Mammary epithelial cell (primary cell): ENCODE measurements at regions of chr7 and their contacts with region 1.

Region 1: GRCh38 chr7:127392566-127393367 is at the start of gene ZNF800:
- DNase-seq: peak; percentile 75
- H3K4me3 ChIP-seq: peak within 1 kb of the TSS; percentile 71 to 99 (median 86)
- H3K27ac ChIP-seq: peak within 1 kb of the TSS; percentile 85
- H3K4me1 ChIP-seq: peaks cover 13% of the 10 kb centered on the region
- H3K27me3 ChIP-seq: no peaks in the 10 kb centered on the region
- CTCF ChIP-seq: no peak
- total RNA-seq, gene ZNF800: 28.2 to 37.3 TPM

Region 2: DNA sequence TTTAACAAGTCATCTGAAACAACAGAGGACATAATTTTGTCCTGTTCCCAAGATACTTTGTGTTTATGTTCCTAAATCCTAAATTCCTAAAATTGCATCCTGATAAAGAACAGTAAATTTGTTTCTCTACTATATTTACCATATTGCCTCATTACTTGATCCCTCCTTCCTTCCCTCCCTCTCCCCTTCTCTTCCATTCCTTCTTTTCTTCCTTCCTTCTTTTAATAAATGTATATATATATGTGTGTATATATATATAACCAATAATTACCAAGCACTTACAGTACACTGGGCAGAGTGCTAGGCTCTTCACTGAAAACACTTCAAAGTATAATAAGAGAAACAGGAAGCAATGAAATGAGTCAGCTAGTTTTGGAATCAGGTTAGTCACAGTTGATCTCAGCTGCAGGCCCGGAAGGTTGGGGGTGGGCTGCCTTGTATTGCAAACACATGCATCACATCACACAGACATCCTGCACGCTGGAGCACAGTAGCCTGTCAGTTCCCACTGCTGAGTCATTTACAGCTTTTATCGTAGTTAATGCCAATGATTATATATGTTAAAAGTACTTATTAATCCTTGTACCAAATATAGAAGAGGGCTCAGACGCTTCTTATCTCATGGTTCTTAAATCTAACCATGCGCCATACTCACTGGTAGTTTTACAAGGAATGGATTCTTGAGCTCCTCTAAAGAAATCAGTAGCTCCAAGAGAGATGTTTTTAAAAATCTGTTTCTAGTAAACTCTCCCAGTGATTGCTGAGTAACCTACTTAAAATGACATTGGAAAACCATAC is 691.8 kb before region 1 on chr7:
- CTCF ChIA-PET with region 1: no interaction called
- dilution Hi-C with region 1: no loop called
- in situ Hi-C with region 1: no loop called
- intact Hi-C with region 1: loop called (anchors 2 kb)
- DNase-seq: peak; percentile 93
- H3K4me3 ChIP-seq: peak overlapping the region in 1 of 3 experiments; percentile 31
- H3K27ac ChIP-seq: peak overlapping the region; percentile 85
- H3K4me1 ChIP-seq: peaks cover 36% of the 10 kb centered on the region
- H3K27me3 ChIP-seq: no peaks in the 10 kb centered on the region
- CTCF ChIP-seq: no peak

Region 3: GRCh38 chr7:127585044-127585953 is 192.5 kb after region 1 on chr7 and contains the start of gene GCC1:
- CTCF ChIA-PET with region 1: no interaction called
- dilution Hi-C with region 1: no loop called
- in situ Hi-C with region 1: no loop called
- intact Hi-C with region 1: loop called (anchors 1 kb)
- DNase-seq: peak; percentile 81
- H3K4me3 ChIP-seq: peak within 1 kb of the TSS; percentile 54 to 73 (median 69)
- H3K27ac ChIP-seq: peak within 1 kb of the TSS; percentile 70
- H3K4me1 ChIP-seq: peaks cover 24% of the 10 kb centered on the region
- H3K27me3 ChIP-seq: no peaks in the 10 kb centered on the region
- CTCF ChIP-seq: no peak
- total RNA-seq, gene GCC1: 22.3 to 25.4 TPM

Region 4: DNA sequence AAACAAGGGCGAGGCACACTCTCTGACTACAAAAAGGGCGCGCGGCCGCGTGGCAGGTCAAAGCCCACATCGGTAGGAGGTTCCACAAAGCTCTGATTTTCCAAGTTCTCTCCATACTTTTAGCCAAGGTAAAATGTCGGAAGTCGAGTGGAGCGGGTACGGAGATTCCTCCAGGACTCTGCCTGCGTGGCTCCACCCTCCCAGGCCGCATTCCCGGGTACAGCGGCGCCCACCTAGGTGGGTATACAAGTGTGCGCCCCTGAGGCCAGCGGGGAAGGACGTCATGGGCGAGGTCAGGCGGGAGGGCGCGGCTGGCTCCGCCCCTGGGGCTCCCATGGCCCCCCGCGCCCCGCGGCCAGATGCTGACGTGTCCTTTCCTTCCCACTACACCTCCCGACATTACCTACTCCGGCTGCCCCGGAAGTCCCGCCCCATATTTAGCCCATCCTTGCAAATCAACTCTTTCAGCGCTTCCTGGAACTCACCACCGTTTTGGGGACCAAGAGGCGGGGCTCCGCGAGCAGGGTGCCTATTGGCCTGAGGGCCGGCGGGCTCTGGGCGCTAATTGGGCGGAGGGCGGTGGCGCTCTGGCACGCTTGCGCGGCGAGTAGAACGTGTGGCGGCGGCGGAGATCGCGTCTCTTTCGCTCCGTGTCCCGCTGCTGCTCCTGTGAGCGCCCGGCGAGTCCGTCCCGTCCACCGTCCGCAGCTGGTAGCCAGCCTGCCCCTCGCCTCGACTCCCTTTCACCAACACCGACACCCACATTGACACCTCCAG is 259.0 kb after region 1 on chr7 and contains the start of gene SND1:
- CTCF ChIA-PET with region 1: no interaction called
- dilution Hi-C with region 1: no loop called
- in situ Hi-C with region 1: no loop called
- intact Hi-C with region 1: loop called (anchors 10 kb)
- DNase-seq: peak; percentile 99
- H3K4me3 ChIP-seq: peak within 1 kb of the TSS; percentile 80 to 94 (median 82)
- H3K27ac ChIP-seq: peak within 1 kb of the TSS; percentile 92
- H3K4me1 ChIP-seq: peaks cover 28% of the 10 kb centered on the region
- H3K27me3 ChIP-seq: no peaks in the 10 kb centered on the region
- CTCF ChIP-seq: no peak
- total RNA-seq, gene SND1: 196 to 234 TPM